Activated CD8-positive, alpha-beta T cell treated with anti-CD3 and anti-CD28 coated beads for 36 hours (primary cell): ENCODE measurements at regions of chr21 and their contacts with region 1.

Region 1: GRCh38 chr21:37366482-37367316 is at the start of gene DYRK1A:
- DNase-seq: peak; percentile 97
- ATAC-seq: peak; percentile 83
- H3K4me3 Mint-ChIP-seq: peak within 1 kb of the TSS; percentile 93
- H3K27ac Mint-ChIP-seq: peak within 1 kb of the TSS; percentile 99
- H3K4me1 Mint-ChIP-seq: peaks cover 31% of the 10 kb centered on the region
- H3K27me3 Mint-ChIP-seq: no peaks in the 10 kb centered on the region
- CTCF ChIP-seq: no peak
- total RNA-seq, gene DYRK1A: 57.5 to 58.7 TPM

Region 2: GRCh38 chr21:37267269-37268184 is 99.2 kb before region 1 on chr21 and contains the start of gene VPS26C:
- CTCF ChIA-PET with region 1: interaction called, 5 read pairs
- POLR2A ChIA-PET with region 1: interaction called, 6 read pairs
- intact Hi-C with region 1: loop called (anchors 5 kb)
- DNase-seq: peak; percentile 99
- ATAC-seq: peak; percentile 93
- H3K4me3 Mint-ChIP-seq: peak within 1 kb of the TSS; percentile 90
- H3K27ac Mint-ChIP-seq: peak within 1 kb of the TSS; percentile 98
- H3K4me1 Mint-ChIP-seq: peaks cover 35% of the 10 kb centered on the region
- H3K27me3 Mint-ChIP-seq: no peaks in the 10 kb centered on the region
- CTCF ChIP-seq: no peak
- total RNA-seq, gene VPS26C: 70.9 to 73.4 TPM

Region 3: DNA sequence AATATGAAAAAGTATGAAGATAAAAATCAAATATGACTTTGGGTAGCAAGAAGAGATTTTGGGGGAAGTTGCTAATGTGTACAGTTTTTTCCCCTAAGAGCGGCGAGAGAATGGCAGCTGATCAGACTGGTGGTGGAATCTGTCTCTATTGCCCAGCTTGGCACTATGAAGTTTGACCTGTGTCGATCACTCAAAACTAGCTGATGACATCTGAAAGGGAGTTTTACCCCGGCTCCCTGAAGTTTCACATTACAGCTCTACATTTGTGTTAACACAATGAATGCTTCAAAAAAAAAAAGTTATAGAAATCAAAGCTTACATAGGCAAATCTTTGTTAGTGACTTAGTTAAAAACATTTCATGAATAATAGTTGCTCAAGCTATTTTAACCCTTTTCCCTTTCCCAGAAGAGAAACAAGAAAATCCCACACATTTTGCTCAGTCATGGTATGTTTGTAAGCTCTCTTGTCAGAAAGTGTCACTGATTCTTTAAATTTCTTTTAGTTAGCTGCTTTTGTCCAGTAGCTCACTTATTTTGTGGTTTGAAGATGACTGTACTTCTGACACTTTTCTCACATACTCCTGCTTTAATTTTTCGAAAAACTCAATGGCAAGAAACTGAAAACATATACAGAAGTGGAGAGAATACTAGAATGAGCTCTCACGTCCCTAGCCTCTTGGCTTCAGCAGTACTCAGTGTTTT is 41.2 kb after region 1 on chr21:
- CTCF ChIA-PET with region 1: interaction called, 5 read pairs
- POLR2A ChIA-PET with region 1: interaction called, 6 read pairs
- intact Hi-C with region 1: loop called (anchors 5 kb)
- DNase-seq: no peak
- ATAC-seq: peak; percentile 70
- H3K4me3 Mint-ChIP-seq: peak overlapping the region; percentile 18
- H3K27ac Mint-ChIP-seq: peak overlapping the region; percentile 68
- H3K4me1 Mint-ChIP-seq: peaks cover 80% of the 10 kb centered on the region
- H3K27me3 Mint-ChIP-seq: no peaks in the 10 kb centered on the region
- CTCF ChIP-seq: no peak

Region 4: DNA sequence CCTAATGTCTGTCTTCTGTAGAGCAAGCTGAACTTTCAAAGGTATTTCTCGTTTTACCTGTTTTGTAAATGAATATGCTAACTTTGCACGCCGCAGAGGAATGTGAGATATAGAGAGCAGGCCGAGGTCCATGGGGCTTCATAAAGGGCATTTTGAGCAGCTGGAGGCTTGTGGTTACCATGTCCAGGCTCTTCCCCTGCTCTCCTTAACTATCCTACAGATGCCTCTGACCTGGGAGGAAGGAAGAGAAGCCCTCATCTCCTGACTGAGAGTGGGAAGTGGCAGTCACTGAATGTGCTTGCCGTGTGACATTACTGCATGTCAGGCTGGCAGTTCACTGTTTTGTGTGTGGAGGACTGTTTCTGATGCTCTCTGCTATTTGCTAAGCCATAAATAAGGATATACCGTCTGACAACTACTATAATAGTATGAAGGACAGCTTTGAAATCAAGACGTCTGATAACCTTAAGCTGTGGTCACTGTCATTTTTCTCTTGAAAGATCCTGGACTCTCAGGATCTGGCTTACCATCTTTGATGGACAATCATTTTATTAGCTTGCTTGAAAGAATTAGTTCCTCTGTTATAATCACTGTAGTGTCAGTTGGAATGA is 92.1 kb after region 1 on chr21:
- CTCF ChIA-PET with region 1: interaction called, 4 read pairs
- POLR2A ChIA-PET with region 1: interaction called, 5 read pairs
- intact Hi-C with region 1: loop called (anchors 5 kb)
- DNase-seq: no peak
- ATAC-seq: no peak
- H3K4me3 Mint-ChIP-seq: no peak overlapping the region
- H3K27ac Mint-ChIP-seq: peak overlapping the region; percentile 83
- H3K4me1 Mint-ChIP-seq: peaks cover 83% of the 10 kb centered on the region
- H3K27me3 Mint-ChIP-seq: no peaks in the 10 kb centered on the region
- CTCF ChIP-seq: no peak

Region 5: DNA sequence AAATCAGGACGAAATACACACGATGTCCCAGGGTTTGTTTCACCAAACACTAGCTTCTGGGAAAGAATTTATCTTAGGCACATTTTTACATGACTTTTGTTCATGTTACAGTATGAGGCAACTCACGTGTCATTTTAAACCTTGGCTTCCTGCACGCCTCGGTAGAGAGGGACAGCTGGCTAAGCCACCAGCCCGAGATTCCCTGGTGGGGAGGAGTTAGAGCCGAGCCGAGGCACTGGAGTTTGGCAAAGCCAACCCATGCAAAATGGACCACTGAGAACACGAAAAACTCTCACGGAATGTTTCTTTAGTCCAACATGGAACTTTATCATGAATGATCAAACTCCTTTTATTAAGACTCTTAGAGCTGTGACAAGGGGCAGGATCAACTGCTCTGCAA is 239.8 kb after region 1 on chr21:
- CTCF ChIA-PET with region 1: no interaction called
- POLR2A ChIA-PET with region 1: no interaction called
- intact Hi-C with region 1: no loop called
- DNase-seq: no peak
- ATAC-seq: no peak
- H3K4me3 Mint-ChIP-seq: no peak overlapping the region
- H3K27ac Mint-ChIP-seq: no peak overlapping the region
- H3K4me1 Mint-ChIP-seq: no peaks in the 10 kb centered on the region
- H3K27me3 Mint-ChIP-seq: peaks cover 16% of the 10 kb centered on the region
- CTCF ChIP-seq: no peak